ENCODE measurements at regions of chr1 and their contacts with region 1.

Region 1: DNA sequence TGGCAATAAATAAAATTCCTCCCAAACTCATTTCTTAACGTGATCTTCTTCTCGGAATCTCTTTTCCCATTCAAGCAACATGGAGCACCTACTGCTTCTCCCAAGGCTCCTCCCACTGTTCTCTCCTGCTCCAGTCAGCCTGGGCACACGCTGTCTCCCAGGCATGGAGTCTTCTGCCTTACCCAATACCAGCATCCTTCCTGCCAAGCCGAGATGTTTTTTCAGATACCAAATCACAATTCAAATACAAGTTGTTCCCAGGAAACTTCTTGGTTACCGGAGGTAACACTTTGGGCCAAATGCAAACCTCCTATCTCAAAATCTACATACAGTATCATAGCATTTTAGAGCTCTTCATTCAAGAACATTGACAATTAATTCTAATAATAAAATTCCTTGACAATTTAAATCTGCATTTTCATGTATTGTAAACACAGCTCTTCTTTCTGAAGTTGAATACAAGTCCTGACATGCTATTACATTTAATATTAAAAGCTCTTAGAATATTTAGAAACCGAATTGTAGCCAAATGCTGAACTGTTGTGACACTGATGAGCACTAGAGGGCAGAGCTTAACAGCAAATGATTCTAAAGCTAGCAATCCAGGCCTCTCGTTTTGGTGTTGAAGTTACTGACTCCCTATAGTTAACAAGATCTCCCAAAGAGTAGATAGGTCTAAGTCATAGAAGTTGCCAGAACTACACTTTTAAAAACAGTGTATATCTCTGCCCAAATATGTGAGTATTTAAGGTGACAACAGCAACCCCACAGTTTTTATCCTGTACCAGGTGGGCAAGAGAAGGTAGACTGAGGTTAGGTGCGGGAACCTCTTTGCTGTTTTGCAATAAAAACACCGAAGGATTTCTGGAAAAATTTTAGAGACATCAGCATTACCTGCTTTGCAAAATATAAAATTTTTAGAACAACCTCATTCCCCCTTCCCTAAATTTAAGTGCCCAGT is 52.3 kb downstream of the BCAR3 start:
- DNase-seq: peak; percentile 59
- ATAC-seq: peak; percentile 55
- H3K4me3 Mint-ChIP-seq: no peak overlapping the region
- H3K27ac Mint-ChIP-seq: no peak overlapping the region
- H3K4me1 Mint-ChIP-seq: peaks cover 8% of the 10 kb centered on the region
- H3K27me3 Mint-ChIP-seq: peaks cover 8% of the 10 kb centered on the region

Region 2: DNA sequence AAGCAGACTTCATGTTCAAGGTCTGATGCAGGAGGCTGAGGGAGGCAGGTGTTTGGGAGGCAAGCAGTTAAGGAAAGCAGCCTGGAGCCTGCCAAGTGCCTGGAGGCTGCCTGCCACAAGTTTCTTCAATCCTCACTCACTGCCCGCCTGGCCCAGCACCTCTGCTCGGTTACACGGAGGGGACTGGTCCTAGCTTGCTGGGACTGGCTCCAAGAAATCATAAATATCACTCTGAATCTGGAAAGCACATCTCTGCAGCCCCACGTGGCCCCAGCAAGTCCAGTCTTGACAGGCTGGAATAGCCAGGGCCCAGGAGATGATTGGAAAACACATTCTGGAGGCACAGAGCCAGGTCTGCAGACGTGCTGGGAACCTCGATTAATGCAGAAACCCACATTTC is 31.7 kb before region 1 on chr1:
- CTCF ChIA-PET with region 1: no interaction called
- DNase-seq: no peak
- ATAC-seq: no peak
- H3K4me3 Mint-ChIP-seq: no peak overlapping the region
- H3K27ac Mint-ChIP-seq: no peak overlapping the region
- H3K4me1 Mint-ChIP-seq: no peaks in the 10 kb centered on the region
- H3K27me3 Mint-ChIP-seq: peaks cover 42% of the 10 kb centered on the region

Region 3: GRCh38 chr1:93615582-93616150 is 13.7 kb before region 1 on chr1:
- CTCF ChIA-PET with region 1: interaction called, 12 read pairs
- DNase-seq: peak; percentile 67
- ATAC-seq: peak; percentile 65
- H3K4me3 Mint-ChIP-seq: peak overlapping the region; percentile 41
- H3K27ac Mint-ChIP-seq: peak overlapping the region; percentile 70
- H3K4me1 Mint-ChIP-seq: peaks cover 22% of the 10 kb centered on the region
- H3K27me3 Mint-ChIP-seq: peaks cover 54% of the 10 kb centered on the region

Region 4: GRCh38 chr1:93652323-93652949 is 23.1 kb after region 1 on chr1:
- CTCF ChIA-PET with region 1: interaction called, 16 read pairs
- DNase-seq: no peak
- ATAC-seq: no peak
- H3K4me3 Mint-ChIP-seq: no peak overlapping the region
- H3K27ac Mint-ChIP-seq: no peak overlapping the region
- H3K4me1 Mint-ChIP-seq: no peaks in the 10 kb centered on the region
- H3K27me3 Mint-ChIP-seq: peaks cover 22% of the 10 kb centered on the region

Region 5: GRCh38 chr1:93814059-93814794 is 184.8 kb after region 1 on chr1:
- CTCF ChIA-PET with region 1: interaction called, 154 read pairs
- DNase-seq: peak; percentile 67
- ATAC-seq: peak; percentile 61
- H3K4me3 Mint-ChIP-seq: no peak overlapping the region
- H3K27ac Mint-ChIP-seq: no peak overlapping the region
- H3K4me1 Mint-ChIP-seq: peaks cover 22% of the 10 kb centered on the region
- H3K27me3 Mint-ChIP-seq: no peaks in the 10 kb centered on the region

Region 6: DNA sequence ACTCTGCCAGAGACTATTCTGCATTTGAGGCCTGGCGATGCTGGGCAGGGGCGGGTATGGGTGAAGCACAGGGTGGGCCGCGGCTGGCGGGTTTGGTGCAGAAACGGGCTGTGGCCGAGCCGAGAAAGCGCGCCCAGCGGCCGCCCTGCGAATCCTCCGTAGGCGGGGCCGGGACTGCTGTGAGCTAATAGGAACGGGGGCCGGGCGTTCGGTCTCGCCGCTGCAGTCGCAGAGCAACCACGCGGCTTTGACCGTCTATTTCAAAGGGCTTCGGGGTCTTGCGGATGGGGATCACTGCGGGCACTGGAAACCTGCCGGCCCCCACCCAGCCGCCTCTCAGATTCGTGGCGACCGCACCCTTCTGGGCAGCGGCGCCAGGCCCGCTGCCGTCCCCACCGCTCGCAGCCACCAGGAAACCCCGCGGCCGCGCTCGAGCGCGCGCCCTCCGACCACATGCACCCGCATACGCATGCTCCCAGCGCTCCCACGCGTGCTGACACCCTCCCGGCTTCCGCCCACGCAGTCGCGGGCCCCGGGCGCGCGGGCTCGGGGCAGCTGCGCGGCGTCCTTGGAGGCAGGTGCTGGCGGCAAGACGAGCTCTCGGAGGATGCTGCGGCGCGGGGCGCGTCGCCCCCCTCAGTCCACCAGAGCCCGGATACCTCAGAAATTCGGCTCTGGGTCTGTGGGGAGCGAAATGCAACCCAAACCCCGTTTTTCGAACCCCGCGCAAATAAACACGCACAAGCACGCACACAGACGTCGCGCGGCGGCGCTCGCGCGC is 217.0 kb after region 1 on chr1:
- CTCF ChIA-PET with region 1: interaction called, 143 read pairs
- DNase-seq: peak; percentile 90
- ATAC-seq: peak; percentile 61
- H3K4me3 Mint-ChIP-seq: peak overlapping the region; percentile 88
- H3K27ac Mint-ChIP-seq: peak overlapping the region; percentile 93
- H3K4me1 Mint-ChIP-seq: peaks cover 19% of the 10 kb centered on the region
- H3K27me3 Mint-ChIP-seq: peaks cover 2% of the 10 kb centered on the region

Measured in activated CD8-positive, alpha-beta memory T cell treated with anti-CD3 and anti-CD28 coated beads, Interleukin-2, amount 10 ng/mL, durations not matched to agents 7 days and 5 days (primary cell).